Right cardiac atrium (tissue), 5 donors: ENCODE measurements at regions of chr14 and their contacts with region 1.

Region 1: DNA sequence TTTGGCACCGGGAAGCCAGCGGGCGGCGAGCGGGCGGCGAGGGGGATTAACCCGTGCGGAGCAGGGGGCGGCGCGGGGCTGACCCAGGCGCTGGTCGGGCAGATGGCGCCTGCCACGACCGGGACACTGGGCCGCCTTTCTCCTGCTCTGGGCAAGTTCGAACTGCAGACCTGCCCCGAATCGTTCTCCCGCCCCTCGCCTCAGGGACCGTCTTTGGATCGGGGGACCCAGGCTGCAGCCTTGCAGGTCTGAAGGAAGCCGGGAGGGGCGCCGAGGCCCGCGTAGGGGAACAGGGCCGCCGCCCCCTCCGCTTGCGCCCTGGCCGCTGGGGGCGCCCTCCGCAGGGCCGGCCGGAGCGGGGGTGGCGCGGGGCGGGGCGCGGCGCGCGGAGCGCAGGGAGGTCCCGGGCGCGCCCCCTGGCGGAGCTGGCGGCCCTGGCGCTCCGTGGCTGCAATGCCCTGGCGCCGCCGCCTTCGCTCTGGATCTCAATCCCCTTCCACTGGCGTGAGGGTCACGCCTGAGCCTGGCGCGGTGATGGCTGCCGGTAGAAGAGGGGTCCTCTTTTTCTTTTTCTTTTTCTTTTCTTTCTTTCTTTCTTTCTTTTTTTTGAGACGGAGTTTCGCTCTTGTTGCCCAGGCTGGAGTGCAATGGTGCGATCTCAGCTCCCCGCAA is 449 bp upstream of the LTBP2 start:
- DNase-seq: peak; percentile 83 to 95 (median 93)
- ATAC-seq: peak; percentile 78 to 83
- H3K4me3 ChIP-seq: peak overlapping the region; percentile 84
- H3K27ac ChIP-seq: no peak overlapping the region
- H3K4me1 ChIP-seq: no peaks in the 10 kb centered on the region
- H3K27me3 ChIP-seq: no peaks in the 10 kb centered on the region

Region 2: DNA sequence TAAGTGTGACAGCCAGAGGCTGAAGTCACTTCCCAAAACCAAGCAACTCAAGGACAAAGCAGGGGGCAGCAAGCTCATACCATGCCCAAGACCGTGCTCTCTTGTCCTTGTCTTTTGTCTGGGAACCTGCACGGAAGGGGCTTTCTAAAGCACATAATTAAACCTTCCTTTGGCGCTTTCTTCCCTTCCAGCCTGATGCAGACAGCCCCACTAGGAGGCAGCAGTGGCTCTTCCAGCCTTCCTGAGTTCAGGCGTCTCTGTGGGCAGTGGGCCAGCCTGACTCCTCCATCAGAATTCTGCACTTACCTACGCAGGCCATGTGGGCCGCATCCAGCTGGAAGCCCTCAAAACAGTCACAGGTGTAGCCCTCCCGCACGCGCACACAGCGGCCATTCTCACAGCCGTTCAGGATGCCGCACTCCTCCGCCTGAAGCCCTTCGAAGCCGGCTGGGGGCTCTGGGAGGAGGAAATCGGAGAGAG is 111.3 kb before region 1 on chr14:
- intact Hi-C with region 1: loop called in 3 of 4 experiments (anchors 5 to 10 kb)
- DNase-seq: peak; percentile 85 to 94 (median 90)
- ATAC-seq: peak; percentile 55 to 69
- H3K4me3 ChIP-seq: no peak overlapping the region
- H3K27ac ChIP-seq: no peak overlapping the region
- H3K4me1 ChIP-seq: no peaks in the 10 kb centered on the region
- H3K27me3 ChIP-seq: no peaks in the 10 kb centered on the region

Region 3: GRCh38 chr14:74549588-74549987 is 62.9 kb before region 1 on chr14:
- intact Hi-C with region 1: loop called in 1 of 4 experiments (anchors 10 kb)
- DNase-seq: no peak
- ATAC-seq: no peak
- H3K4me3 ChIP-seq: no peak overlapping the region
- H3K27ac ChIP-seq: no peak overlapping the region
- H3K4me1 ChIP-seq: no peaks in the 10 kb centered on the region
- H3K27me3 ChIP-seq: no peaks in the 10 kb centered on the region

Region 4: GRCh38 chr14:74712499-74713394 is 100.3 kb after region 1 on chr14 and contains the starts of genes AREL1 and FCF1:
- intact Hi-C with region 1: loop called in 1 of 4 experiments (anchors 10 kb)
- DNase-seq: peak; percentile 77 to 88 (median 86)
- ATAC-seq: peak; percentile 98 to 99
- H3K4me3 ChIP-seq: peak within 1 kb of the TSS; percentile 100
- H3K27ac ChIP-seq: peak within 1 kb of the TSS; percentile 76
- H3K4me1 ChIP-seq: no peaks in the 10 kb centered on the region
- H3K27me3 ChIP-seq: no peaks in the 10 kb centered on the region
- total RNA-seq, gene AREL1: 22.2 to 25.4 (median 23.3) TPM
- total RNA-seq, gene FCF1: 29.3 to 38.8 (median 38.1) TPM

Region 5: DNA sequence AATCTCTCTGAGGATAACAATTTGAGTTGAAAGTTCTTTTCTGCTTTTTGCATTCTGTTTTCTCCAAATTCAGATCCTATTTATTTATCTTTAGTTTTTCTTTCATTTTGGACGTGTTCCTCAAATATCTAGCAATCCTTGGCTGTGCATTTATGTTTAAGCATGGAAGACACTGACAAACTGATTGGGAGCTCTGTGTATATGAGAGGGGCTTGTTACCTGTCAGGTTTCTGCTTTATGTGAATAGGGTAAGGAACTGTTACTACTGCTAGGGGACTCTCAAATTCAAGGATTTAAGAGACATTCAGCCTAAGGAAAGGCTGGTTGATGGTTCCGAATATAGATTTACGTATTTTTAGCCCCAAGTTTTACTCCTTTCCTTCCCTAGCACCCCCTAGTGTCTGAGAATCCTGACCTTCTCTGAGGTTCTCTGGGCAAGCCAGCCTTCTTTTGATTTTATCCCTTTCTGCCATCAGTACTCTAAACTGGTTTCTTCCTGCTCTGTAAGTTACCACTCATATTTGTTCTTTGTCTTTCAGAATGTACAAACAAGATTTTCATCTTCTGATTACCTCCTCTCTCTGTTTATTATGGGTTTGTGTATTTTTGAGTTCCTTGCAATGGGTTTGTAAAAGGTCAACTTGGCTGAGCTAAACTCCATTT is 181.2 kb after region 1 on chr14:
- intact Hi-C with region 1: loop called in 1 of 4 experiments (anchors 10 kb)
- DNase-seq: no peak
- ATAC-seq: peak in 1 of 2 donors; percentile 21
- H3K4me3 ChIP-seq: no peak overlapping the region
- H3K27ac ChIP-seq: no peak overlapping the region
- H3K4me1 ChIP-seq: peaks cover 4% of the 10 kb centered on the region
- H3K27me3 ChIP-seq: no peaks in the 10 kb centered on the region

Region 6: DNA sequence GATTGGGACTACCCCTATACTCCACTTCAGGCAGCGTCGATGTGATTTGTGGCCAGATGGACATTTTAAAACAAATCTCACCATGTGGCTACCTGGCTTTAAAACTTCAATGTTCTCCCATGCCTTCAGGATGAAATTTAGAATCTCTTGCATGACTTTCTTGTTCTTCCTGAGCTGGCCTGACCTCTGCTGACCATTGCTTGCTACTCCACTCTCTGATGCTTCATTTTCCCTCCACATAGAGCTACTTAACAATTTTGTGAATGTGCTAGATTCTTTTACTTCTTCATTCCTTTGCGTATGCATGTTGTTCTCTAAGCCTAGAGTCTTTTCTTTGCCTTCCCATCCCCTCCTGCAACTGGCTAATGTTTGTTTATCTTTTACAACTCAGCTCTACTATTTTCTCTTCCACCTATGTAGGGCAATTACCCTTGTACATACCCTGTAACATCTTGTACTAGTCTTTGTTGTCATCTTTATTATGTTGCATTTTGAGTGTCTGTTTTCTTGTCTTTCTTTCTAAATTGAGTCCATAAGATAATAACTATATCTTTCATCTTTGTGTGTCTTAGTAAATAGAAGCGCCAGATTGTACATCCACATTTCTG is 191.8 kb after region 1 on chr14:
- intact Hi-C with region 1: loop called in 2 of 4 experiments (anchors 10 kb)
- DNase-seq: no peak
- ATAC-seq: no peak
- H3K4me3 ChIP-seq: no peak overlapping the region
- H3K27ac ChIP-seq: no peak overlapping the region
- H3K4me1 ChIP-seq: no peaks in the 10 kb centered on the region
- H3K27me3 ChIP-seq: no peaks in the 10 kb centered on the region